ENCODE measurements at regions of chr9 and their contacts with region 1.

Region 1: DNA sequence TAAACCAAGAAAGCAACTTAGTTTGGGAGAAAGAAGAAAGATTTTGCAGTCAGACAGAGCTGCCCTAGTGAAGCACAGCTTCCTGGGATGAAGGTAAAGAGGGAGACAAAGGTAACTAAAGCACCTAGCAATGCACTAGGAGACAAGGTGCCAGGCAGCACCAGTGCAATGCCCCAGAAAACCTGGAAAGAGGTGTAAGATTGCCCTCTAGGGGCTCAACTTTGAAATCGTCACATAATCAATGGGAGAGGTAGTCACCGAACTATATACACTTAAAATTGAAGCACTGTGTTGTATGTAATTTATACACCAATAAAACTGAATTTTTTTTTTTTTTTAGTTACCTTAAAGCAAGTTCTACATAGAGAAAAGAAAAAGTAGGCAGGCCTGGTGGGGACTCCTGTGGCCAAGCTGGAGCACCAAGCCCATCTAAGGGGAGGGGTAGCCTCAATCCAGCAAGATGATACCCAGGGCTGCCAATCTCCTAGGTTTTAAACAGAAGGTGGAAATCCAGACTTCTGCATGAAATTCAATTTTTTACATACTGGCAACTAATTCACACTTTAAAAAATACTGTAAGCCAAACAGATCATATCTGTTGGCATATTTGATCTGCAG is 48.2 kb downstream of the CDK5RAP2 start:
- DNase-seq: peak; percentile 42 to 44
- H3K4me3 ChIP-seq: no peak overlapping the region
- H3K27ac ChIP-seq: peak overlapping the region in 1 of 3 donors; percentile 37
- H3K4me1 ChIP-seq: peaks cover 11 to 26% of the 10 kb centered on the region in 2 donors
- H3K27me3 ChIP-seq: no peaks in the 10 kb centered on the region
- CTCF ChIP-seq: peak in 5 of 6 experiments; percentile 25 to 70 (median 52)
- POLR2A ChIP-seq: no peak

Region 2: DNA sequence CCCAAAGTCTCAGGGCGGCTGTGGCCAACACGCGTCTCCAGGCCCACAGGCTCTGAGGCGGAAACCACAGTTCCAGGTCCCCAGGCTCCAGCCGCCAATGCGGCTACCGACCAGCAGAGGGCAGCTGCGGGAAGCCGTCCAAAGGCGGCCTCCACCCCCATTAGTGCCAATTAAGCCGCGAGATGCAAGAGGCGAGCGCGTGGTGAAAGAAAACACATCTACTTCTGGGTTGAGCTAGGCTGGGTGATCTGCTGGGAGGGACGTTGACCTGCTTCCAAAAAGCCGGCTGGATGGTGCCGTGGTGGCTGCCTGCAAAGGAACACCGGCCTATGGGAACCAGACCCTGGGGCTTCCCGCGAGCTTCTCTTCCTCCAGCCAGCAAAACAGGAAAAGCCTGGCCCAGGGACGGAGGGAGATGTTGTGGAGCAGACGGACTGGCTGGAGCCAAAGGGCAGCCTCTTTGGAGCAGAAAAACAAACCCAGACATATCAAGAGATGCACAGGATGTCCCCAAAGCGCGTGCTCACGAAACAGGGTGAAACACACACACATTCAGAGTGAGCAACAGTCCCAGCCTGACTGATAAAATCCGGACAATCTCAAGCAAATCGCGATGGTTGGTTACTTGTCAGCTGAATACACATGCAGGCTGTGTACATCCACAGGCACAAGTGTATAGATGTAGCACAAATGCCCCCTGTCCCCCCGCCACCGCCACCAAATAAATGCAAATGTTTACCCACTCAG is 975.5 kb before region 1 on chr9:
- intact Hi-C with region 1: loop called (anchors 10 kb)
- DNase-seq: peak; percentile 72 to 80
- H3K4me3 ChIP-seq: peak overlapping the region in 1 of 3 donors; percentile 10
- H3K27ac ChIP-seq: peak overlapping the region in 1 of 3 donors; percentile 35
- H3K4me1 ChIP-seq: peaks cover 0 to 11% of the 10 kb centered on the region in 2 donors
- H3K27me3 ChIP-seq: no peaks in the 10 kb centered on the region
- CTCF ChIP-seq: peak; percentile 85 to 96 (median 89)
- POLR2A ChIP-seq: no peak

Region 3: GRCh38 chr9:120366646-120367019 is 165.2 kb before region 1 on chr9:
- intact Hi-C with region 1: loop called (anchors 10 kb)
- DNase-seq: peak; percentile 74 to 87
- H3K4me3 ChIP-seq: no peak overlapping the region
- H3K27ac ChIP-seq: peak overlapping the region; percentile 2 to 73 (median 24)
- H3K4me1 ChIP-seq: peaks cover 0 to 7% of the 10 kb centered on the region in 2 donors
- H3K27me3 ChIP-seq: no peaks in the 10 kb centered on the region
- CTCF ChIP-seq: peak in 3 of 6 experiments; percentile 29 to 60 (median 36)
- POLR2A ChIP-seq: no peak

Region 4: DNA sequence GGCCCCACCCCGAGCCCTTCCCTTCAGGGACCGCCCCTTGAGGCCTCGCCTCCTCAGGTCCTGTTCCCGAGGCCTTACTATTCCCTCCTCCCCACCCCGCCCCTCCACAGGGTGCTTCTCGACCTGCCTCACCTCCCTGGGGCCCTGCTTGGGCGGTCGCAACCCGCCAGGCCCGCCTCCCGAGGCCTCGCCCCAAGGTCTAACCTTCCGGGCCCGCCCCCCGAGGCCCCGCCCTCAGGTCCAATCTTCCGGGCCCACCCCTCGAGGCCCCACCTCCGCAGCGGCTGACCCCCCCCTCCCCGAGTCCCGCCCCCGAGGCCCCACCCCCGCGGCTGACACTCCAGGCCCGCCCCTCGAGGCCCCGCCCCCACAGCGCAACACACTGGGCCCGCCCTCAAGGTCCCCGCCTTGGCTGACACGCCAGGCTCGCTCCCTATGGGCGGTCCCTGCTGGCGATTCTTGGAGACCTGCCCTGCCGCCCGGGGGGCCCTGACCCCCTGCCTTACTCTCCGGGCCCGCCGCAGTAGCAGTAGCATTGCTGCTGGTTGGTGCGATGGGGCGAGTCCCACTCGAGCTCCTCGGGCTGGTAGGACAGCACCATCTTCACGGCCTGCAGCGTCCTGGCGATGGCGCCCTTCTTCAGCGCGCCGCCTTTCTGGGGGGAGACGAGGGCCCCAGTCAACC is 337.0 kb after region 1 on chr9:
- intact Hi-C with region 1: no loop called
- DNase-seq: peak; percentile 99
- H3K4me3 ChIP-seq: peak overlapping the region in 2 of 3 donors; percentile 38
- H3K27ac ChIP-seq: peak overlapping the region; percentile 71 to 81 (median 78)
- H3K4me1 ChIP-seq: peaks cover 2 to 7% of the 10 kb centered on the region in 2 donors
- H3K27me3 ChIP-seq: no peaks in the 10 kb centered on the region
- CTCF ChIP-seq: peak in 3 of 6 experiments; percentile 37 to 46 (median 40)
- POLR2A ChIP-seq: peak in 1 of 2 donors; percentile 60

Measured in thyroid gland (tissue), 4 donors.